GM12878 (cell line): ENCODE measurements at regions of chr10 and their contacts with region 1.

Region 1: DNA sequence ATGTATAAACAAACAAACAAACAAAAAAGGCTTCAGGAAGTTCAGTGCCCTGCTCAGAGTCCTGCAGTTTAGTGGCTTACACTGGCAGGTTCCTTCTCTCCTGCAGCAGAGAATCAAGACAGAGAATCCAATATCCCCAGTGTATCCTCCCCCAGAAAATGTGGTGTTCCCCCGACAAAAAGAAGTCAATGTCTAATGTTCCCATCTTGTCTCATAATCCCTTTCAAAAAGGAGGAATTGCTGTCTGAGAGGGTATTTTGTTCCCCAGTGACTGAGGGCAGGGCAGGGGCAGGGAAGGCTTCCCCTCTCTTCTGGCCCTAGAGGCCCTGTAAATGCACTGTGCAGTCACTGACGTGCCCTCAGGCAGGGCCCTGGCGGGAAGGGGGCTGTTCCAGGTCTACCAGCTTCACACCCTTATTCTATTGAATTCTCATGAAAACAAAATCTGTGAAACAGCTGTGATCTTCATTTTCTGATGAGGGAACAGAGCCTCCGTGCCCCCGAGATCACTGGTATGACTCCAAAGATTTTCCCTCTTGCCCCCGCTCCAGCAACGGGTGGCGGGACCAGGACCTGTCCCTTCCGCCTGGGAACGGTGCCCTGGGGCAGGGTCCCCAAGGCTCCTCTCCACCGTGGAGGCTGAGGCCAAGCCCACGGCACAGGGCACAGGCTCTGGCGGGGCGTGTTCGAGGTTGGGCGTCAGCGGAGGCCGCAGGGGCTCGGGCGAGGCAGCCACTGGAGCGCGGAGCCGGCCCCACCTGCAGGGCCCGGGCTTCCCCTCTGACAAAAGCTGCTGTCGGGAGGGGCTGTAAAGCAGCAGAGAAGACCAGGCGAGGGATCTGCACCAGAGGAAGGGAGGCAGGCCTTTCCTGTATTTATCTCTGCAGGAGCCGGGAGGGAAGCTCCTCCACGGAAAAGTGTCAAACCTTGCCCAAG is 13.4 kb upstream of the WDFY4 start:
- DNase-seq: no peak
- ATAC-seq: peak; percentile 82
- H3K4me3 ChIP-seq: peak overlapping the region; percentile 56
- H3K27ac ChIP-seq: peak overlapping the region; percentile 100
- H3K4me1 ChIP-seq: peaks cover 43% of the 10 kb centered on the region
- H3K27me3 ChIP-seq: no peaks in the 10 kb centered on the region; a peak in 1 of 4 replicates
- CTCF ChIP-seq: no peak
- EP300 ChIP-seq: peak; percentile 66 to 87; a peak in 3 of 4 replicates
- POLR2A ChIP-seq: peak; percentile 80
- RAD21 ChIP-seq: peak; percentile 25; the same call in 1 of the 2 replicates

Region 2: DNA sequence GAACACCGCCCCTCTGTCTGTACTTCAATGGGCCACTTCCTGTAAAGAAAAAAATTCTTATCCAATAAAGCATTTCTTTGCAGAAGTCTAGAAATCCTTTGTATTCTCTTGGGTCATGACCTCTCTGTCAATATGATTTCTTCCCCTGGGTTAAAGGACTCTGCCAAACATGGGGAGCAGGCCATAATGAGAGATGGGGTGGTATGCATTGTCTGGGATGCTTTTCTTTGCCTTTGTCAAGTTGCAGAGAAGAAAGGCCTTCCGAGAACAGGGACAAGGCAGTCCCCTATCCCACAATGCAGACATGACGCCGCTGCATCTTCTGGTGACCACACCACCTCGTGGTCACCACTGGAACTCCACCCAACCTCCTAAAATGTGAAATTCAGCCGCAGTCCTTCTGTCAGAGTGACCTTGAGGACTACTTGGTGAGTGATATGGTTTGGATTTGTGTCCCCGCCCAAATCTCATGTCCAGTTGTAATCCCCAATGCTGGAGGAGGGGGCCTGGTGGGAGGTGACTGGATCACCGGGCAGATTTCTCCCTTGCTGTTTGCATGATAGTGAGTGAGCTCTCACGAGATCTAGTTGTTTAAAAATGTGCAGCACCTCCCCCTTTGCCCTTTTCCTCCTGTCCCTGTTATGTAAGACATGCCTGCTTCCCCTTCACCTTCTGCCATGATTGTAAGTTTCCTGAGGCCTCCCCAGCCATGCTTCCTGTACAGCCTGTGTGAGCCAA is 381.6 kb before region 1 on chr10:
- CTCF ChIA-PET with region 1: no interaction called
- POLR2A ChIA-PET with region 1: no interaction called
- RAD21 ChIA-PET with region 1: no interaction called
- SMC1A ChIA-PET with region 1: no interaction called
- in situ Hi-C with region 1: no loop called
- intact Hi-C with region 1: loop called (anchors 5 kb)
- DNase-seq: no peak
- ATAC-seq: peak; percentile 60
- H3K4me3 ChIP-seq: no peak overlapping the region
- H3K27ac ChIP-seq: no peak overlapping the region
- H3K4me1 ChIP-seq: peaks cover 34% of the 10 kb centered on the region
- H3K27me3 ChIP-seq: no peaks in the 10 kb centered on the region
- CTCF ChIP-seq: peak; percentile 80 to 91 (median 86)
- EP300 ChIP-seq: no peak
- POLR2A ChIP-seq: no peak
- RAD21 ChIP-seq: peak; percentile 86

Region 3: DNA sequence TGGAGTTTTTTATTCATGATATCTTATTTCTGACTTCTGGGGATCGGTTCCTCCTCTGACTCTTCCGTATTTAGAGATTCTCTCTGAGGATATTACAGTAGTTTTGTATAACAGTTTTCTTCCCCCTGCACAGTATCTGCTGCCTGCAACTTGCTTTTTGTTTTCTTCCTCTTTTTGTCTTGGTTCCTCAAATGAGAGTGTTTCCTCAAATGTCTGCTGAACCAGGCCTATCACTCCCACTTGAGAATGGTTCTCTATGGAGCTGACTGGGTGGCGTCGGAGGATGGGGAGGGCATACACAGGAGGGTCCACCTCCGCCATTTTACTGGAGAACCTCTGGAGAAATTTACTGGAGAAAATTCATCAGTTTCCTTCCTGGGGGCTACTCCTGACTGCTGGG is 94.1 kb before region 1 on chr10:
- CTCF ChIA-PET with region 1: no interaction called
- POLR2A ChIA-PET with region 1: no interaction called
- RAD21 ChIA-PET with region 1: no interaction called
- SMC1A ChIA-PET with region 1: no interaction called
- in situ Hi-C with region 1: no loop called
- intact Hi-C with region 1: no loop called
- DNase-seq: no peak
- ATAC-seq: peak; percentile 68
- H3K4me3 ChIP-seq: no peak overlapping the region
- H3K27ac ChIP-seq: peak overlapping the region; percentile 43; the same call in 1 of the 2 replicates
- H3K4me1 ChIP-seq: peaks cover 34% of the 10 kb centered on the region
- H3K27me3 ChIP-seq: no peaks in the 10 kb centered on the region
- CTCF ChIP-seq: no peak
- EP300 ChIP-seq: no peak
- POLR2A ChIP-seq: no peak
- RAD21 ChIP-seq: no peak

Region 4: DNA sequence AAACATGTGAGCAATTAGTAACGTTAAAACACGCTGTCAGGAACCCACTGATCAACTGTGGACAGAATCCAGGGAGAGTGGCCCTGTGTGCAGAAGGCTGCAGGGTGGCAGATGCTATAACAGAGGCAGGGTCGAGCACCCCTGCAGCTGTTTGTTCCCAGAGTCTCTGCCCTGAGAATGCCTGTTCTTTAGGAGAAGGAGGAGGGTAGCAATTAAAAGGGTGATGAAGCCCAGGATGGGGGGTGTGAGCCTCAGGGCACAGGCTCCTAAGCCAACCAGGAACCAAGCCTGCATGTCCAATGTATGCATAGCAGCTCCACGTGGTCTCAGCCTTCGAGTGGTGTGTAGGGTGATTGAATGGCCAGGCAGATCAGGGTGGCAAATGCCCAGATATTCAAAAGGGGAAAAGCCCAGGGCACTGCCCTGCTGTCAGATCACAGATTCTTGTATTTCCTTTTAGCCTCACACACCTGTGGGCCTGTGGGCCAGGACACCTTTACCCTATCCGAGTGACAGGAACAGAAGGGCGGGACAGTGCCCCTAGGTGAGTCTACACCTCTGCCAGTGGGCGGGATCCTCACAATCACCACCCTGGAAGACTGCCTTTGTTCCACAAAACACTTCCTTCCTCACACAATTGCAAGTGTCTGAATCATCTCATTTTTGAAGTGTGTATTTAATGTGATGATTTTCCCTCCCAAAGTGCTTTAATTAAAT is 20.7 kb after region 1 on chr10:
- CTCF ChIA-PET with region 1: interaction called, 4 read pairs
- POLR2A ChIA-PET with region 1: interaction called, 6 read pairs
- RAD21 ChIA-PET with region 1: interaction called, 8 read pairs
- SMC1A ChIA-PET with region 1: interaction called, 11 read pairs
- in situ Hi-C with region 1: no loop called
- intact Hi-C with region 1: no loop called
- DNase-seq: no peak
- ATAC-seq: peak; percentile 7; the same call in 2 of the 3 replicates
- H3K4me3 ChIP-seq: no peak overlapping the region
- H3K27ac ChIP-seq: no peak overlapping the region
- H3K4me1 ChIP-seq: peaks cover 15% of the 10 kb centered on the region
- H3K27me3 ChIP-seq: no peaks in the 10 kb centered on the region
- CTCF ChIP-seq: no peak
- EP300 ChIP-seq: no peak
- POLR2A ChIP-seq: no peak
- RAD21 ChIP-seq: no peak

Region 5: GRCh38 chr10:48708144-48708543 is 36.9 kb after region 1 on chr10:
- CTCF ChIA-PET with region 1: interaction called, 3 read pairs
- POLR2A ChIA-PET with region 1: no interaction called
- RAD21 ChIA-PET with region 1: interaction called, 4 read pairs
- SMC1A ChIA-PET with region 1: interaction called, 11 read pairs
- in situ Hi-C with region 1: no loop called
- intact Hi-C with region 1: no loop called
- DNase-seq: no peak
- ATAC-seq: no peak
- H3K4me3 ChIP-seq: no peak overlapping the region
- H3K27ac ChIP-seq: no peak overlapping the region
- H3K4me1 ChIP-seq: peaks cover 12% of the 10 kb centered on the region
- H3K27me3 ChIP-seq: no peaks in the 10 kb centered on the region
- CTCF ChIP-seq: no peak
- EP300 ChIP-seq: no peak
- POLR2A ChIP-seq: no peak
- RAD21 ChIP-seq: no peak

Region 6: GRCh38 chr10:48802611-48803071 is 131.4 kb after region 1 on chr10:
- CTCF ChIA-PET with region 1: interaction called, 5 read pairs
- POLR2A ChIA-PET with region 1: interaction called, 3 read pairs
- RAD21 ChIA-PET with region 1: interaction called, 5 read pairs
- SMC1A ChIA-PET with region 1: interaction called, 6 read pairs
- in situ Hi-C with region 1: no loop called
- intact Hi-C with region 1: loop called (anchors 5 kb)
- DNase-seq: peak; percentile 95
- ATAC-seq: peak; percentile 94
- H3K4me3 ChIP-seq: no peak overlapping the region
- H3K27ac ChIP-seq: peak overlapping the region; percentile 43
- H3K4me1 ChIP-seq: peaks cover 50% of the 10 kb centered on the region
- H3K27me3 ChIP-seq: no peaks in the 10 kb centered on the region
- CTCF ChIP-seq: no peak; a peak in 1 of 6 replicates
- EP300 ChIP-seq: peak; percentile 77 to 92; a peak in 3 of 4 replicates
- POLR2A ChIP-seq: no peak
- RAD21 ChIP-seq: no peak